ENCODE measurements at regions of chr6 and their contacts with region 1.

Region 1: GRCh38 chr6:28542440-28543296 is 17.0 kb downstream of the GPX5 start:
- DNase-seq: peak; percentile 80 to 83
- H3K4me3 ChIP-seq: peak overlapping the region; percentile 65; the same call in 1 of the 2 replicates
- H3K27ac ChIP-seq: 0 out of 2 replicates have a peak overlapping the region, but pooled peaks have one; percentile 20
- H3K4me1 ChIP-seq: peaks cover 12% of the 10 kb centered on the region; the same call in 1 of the 2 replicates
- H3K27me3 ChIP-seq: no peaks in the 10 kb centered on the region
- CTCF ChIP-seq: peak; percentile 73

Region 2: GRCh38 chr6:28080631-28081485 is 461.8 kb before region 1 on chr6:
- CTCF ChIA-PET with region 1: no interaction called
- POLR2A ChIA-PET with region 1: no interaction called
- intact Hi-C with region 1: loop called (anchors 1 kb)
- DNase-seq: peak; percentile 89 to 95
- H3K4me3 ChIP-seq: peak overlapping the region; percentile 86
- H3K27ac ChIP-seq: peak overlapping the region; percentile 98
- H3K4me1 ChIP-seq: peaks cover 15% of the 10 kb centered on the region; the same call in 1 of the 2 replicates
- H3K27me3 ChIP-seq: no peaks in the 10 kb centered on the region
- CTCF ChIP-seq: no peak

Region 3: DNA sequence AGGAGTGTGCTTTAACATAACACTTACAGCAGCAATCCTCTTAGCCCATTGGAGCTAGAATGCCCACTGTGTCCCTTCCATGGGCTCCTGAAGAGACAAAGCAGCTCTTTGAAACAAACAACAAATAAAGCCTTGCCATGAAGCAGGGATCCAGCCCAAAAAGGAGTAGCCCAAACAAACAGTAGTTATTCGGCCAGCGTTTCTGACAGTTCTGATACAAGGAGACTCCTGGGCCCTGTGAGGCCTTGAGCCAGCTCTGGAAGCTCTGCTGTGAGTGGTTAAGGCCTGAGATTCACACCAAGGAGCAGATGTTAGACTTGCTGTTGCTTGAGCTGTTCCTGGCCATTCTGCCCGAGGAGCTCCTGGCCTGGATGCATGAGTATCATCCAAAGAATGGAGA is 435.2 kb before region 1 on chr6:
- CTCF ChIA-PET with region 1: no interaction called
- POLR2A ChIA-PET with region 1: no interaction called
- intact Hi-C with region 1: no loop called
- DNase-seq: no peak
- H3K4me3 ChIP-seq: no peak overlapping the region
- H3K27ac ChIP-seq: no peak overlapping the region
- H3K4me1 ChIP-seq: peaks cover 11% of the 10 kb centered on the region
- H3K27me3 ChIP-seq: no peaks in the 10 kb centered on the region
- CTCF ChIP-seq: no peak

Region 4: DNA sequence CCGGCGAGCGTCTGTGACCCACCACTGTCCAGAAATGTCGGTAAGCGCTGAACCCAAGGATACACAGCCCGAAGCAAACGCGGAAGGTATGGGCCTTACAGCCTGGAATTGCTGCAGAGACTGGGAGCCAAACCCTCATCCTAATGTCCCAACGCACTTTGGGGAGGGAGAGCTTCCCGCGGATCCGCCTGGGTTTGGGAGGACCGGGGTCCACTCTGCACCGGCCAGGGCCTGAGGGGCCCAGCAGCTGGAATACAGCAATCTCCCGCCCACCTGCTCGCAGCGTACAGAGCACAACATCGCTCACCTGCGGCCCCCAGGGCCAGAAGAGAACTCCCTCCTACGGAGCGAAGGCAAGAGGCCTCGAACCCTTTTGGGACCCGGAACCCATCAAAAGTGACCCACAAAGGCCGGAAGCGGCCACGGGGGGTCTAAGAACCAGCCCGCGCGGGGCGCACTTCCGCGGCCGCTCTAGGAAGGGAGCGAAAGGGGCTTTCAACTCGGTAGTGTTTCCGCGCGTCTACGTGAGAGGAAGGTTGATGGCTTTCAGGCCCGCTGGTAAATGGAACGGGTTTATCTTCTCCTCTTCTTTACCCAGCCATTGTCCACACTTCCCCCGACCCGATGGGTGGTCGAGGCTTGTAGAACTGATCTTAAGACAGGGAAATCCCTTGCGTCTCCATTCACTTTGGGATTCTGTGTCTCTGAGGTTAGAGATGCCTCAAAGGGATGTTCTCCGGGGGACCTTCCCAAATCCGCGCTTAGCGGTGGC is 143.1 kb before region 1 on chr6 and contains the start of gene ZSCAN12:
- CTCF ChIA-PET with region 1: no interaction called
- POLR2A ChIA-PET with region 1: no interaction called
- intact Hi-C with region 1: loop called (anchors 1 kb)
- DNase-seq: peak; percentile 75 to 84
- H3K4me3 ChIP-seq: peak within 1 kb of the TSS; percentile 74
- H3K27ac ChIP-seq: peak within 1 kb of the TSS; percentile 43
- H3K4me1 ChIP-seq: peaks cover 30% of the 10 kb centered on the region
- H3K27me3 ChIP-seq: no peaks in the 10 kb centered on the region
- CTCF ChIP-seq: peak; percentile 43
- total RNA-seq, gene ZSCAN12: 10.9 and 11.2 TPM in 2 replicates

Region 5: DNA sequence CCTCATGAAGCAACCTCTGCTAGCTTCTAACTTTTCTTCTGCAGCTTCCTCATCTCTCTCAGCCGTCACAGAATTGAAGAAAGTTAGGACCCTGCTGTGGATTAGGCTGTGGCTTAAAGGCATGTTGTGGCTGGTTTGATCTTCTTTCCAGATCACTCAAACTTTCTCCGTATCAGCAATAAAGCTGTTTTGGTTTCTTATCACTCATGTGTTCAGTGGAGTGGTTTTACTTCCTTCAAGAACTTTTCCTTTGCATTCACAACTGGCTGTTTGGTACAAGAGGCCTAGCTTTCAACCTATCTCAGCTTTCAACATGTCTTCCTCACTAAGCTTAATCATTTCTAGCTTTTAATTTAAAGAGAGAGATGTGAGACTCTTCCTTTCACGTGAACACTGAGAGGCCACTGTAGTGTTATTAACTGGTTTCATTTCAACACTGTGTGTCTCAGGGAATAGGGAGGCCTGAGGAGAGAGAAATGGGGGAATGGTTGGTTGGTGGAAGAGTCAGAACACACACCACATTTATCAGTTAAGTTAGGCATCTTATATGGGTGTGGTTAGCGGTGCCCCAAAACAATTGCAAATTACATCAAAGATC is 116.6 kb before region 1 on chr6:
- CTCF ChIA-PET with region 1: no interaction called
- POLR2A ChIA-PET with region 1: no interaction called
- intact Hi-C with region 1: no loop called
- DNase-seq: no peak
- H3K4me3 ChIP-seq: no peak overlapping the region
- H3K27ac ChIP-seq: no peak overlapping the region
- H3K4me1 ChIP-seq: no peaks in the 10 kb centered on the region; the same call in 1 of the 2 replicates
- H3K27me3 ChIP-seq: no peaks in the 10 kb centered on the region
- CTCF ChIP-seq: no peak

Region 6: DNA sequence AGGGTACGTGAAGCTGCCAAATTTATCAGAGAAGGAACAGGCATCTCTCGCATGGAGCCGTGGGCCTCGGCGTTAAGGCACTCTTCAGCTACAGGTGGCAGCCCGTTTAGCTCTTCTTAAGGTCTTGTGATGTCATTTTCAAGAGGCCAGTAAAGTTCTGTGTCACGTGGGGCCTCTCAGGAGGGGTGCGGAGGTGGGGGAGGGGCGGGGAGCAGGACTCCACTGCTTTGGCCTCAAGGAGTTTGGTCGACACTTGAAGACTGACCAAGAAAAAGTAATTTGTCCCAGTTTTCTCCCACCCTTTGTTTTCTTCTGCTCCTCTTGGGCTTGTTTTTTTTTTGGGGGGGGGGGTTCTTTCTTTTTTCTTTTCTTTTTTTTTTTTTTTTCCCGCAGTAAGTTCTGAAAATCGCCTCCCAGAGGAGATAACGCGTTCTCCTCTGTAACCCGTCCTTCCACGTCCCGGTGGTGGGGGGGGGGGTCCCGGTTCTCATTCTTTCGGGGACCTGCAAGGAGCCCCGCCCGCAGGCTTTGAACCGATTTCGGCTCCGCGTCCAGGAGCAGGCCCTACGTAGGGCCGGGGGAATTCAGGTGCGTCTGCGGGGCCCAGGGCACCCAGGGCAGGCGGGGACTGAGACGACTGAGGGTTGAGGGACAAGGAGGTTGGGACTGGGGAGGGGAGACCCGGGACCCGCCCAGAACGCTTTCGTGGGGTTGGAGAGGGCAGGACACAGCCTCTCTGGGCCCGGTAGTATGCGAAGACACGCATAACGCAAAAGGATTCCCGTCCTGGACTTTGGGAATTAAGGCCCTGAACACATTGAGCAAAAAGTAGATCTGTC is 53.1 kb before region 1 on chr6:
- CTCF ChIA-PET with region 1: no interaction called
- POLR2A ChIA-PET with region 1: no interaction called
- intact Hi-C with region 1: loop called (anchors 1 kb)
- DNase-seq: peak; percentile 80 to 86
- H3K4me3 ChIP-seq: peak overlapping the region; percentile 63
- H3K27ac ChIP-seq: peak overlapping the region; percentile 64
- H3K4me1 ChIP-seq: peaks cover 24% of the 10 kb centered on the region
- H3K27me3 ChIP-seq: no peaks in the 10 kb centered on the region
- CTCF ChIP-seq: no peak

Region 7: DNA sequence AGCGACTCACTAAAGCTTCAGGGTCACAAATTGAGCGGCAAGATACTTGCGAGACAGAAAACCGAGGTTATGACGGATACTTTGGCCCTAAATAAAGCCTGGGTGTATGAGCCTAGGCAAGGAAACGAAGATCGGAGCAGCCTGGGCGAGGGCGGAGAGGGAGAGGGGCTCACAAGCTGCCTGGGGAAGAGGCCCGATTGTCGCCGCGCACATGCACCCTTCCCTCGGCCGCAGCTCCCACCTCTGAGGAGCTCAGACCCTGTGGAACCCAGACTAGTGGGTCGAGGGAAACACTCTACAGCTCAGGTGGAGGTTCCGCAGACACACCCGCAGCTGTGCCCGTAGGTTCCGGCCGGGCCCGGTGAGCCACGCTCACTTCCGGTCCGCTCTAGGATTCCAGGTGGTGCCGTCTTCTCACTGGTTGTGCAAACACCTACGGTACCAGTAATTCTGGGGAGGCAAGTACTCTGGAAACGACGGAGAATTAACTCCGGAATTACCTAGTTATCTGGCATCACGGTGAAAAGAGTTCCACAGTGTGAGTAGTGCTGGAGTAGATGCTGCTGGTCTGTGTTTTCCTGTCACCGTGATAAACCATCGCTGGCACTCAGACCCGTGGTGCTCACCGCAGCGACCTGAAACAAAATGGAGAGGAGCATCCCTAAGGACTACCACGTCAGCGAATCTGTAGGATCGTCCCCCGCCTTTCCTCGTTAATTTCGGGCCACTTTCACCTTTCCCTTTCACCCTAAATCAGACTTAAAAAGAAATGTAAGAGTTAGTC is 44.5 kb after region 1 on chr6:
- CTCF ChIA-PET with region 1: no interaction called
- POLR2A ChIA-PET with region 1: interaction called, 7 read pairs
- intact Hi-C with region 1: loop called (anchors 5 kb)
- DNase-seq: peak; percentile 58 to 75
- H3K4me3 ChIP-seq: peak overlapping the region; percentile 98
- H3K27ac ChIP-seq: peak overlapping the region; percentile 50; the same call in 1 of the 2 replicates
- H3K4me1 ChIP-seq: peaks cover 32% of the 10 kb centered on the region
- H3K27me3 ChIP-seq: no peaks in the 10 kb centered on the region
- CTCF ChIP-seq: no peak

Region 8: DNA sequence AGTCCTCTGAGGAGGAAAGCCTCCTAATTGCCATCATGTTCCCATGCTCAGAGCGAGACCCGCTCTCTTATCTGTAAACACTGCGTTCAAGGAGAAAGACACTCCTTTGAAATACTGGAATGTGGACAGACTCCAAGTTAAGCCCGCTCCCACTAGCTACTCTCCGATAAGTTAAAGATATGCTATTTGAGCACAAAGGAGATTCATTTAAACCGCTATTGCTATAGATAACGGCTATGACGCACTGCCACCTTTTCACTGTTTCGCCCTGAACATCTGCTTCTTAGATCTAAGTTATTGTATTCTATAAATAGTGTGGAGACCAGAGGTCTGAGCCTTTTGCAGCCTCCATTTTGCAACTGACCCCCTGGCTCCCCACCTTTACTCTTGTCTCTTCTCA is 65.3 kb after region 1 on chr6:
- CTCF ChIA-PET with region 1: no interaction called
- POLR2A ChIA-PET with region 1: no interaction called
- intact Hi-C with region 1: no loop called
- DNase-seq: no peak
- H3K4me3 ChIP-seq: no peak overlapping the region
- H3K27ac ChIP-seq: no peak overlapping the region
- H3K4me1 ChIP-seq: peaks cover 10% of the 10 kb centered on the region; the same call in 1 of the 2 replicates
- H3K27me3 ChIP-seq: no peaks in the 10 kb centered on the region; the same call in 1 of the 2 replicates
- CTCF ChIP-seq: no peak

Region 9: GRCh38 chr6:28673800-28674671 is 131.4 kb after region 1 on chr6:
- CTCF ChIA-PET with region 1: no interaction called
- POLR2A ChIA-PET with region 1: no interaction called
- intact Hi-C with region 1: loop called (anchors 5 kb)
- DNase-seq: peak; percentile 70 to 73
- H3K4me3 ChIP-seq: peak overlapping the region; percentile 79
- H3K27ac ChIP-seq: no peak overlapping the region
- H3K4me1 ChIP-seq: no peaks in the 10 kb centered on the region
- H3K27me3 ChIP-seq: no peaks in the 10 kb centered on the region
- CTCF ChIP-seq: no peak

Region 10: DNA sequence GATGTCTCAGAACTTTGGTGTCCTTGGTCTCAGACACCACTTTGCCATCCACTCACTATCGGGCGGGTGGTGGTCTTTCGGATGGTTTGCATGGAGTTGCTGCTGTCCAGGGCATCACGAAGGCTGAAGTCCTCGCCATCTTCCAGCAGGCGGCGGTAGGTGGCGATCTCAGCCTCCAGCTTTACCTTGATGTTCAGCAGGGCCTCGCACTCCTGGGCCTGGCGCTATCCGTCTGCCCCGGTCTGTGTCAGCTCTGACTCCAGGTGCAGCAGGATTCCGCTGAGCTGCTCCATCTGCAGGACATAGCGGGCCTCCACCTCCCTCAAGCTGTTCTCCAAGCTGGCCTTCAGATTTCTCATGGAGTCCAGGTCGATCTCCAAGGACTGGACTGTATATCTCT is 426.5 kb after region 1 on chr6:
- CTCF ChIA-PET with region 1: no interaction called
- POLR2A ChIA-PET with region 1: no interaction called
- intact Hi-C with region 1: no loop called
- DNase-seq: no peak
- H3K4me3 ChIP-seq: no peak overlapping the region
- H3K27ac ChIP-seq: no peak overlapping the region
- H3K4me1 ChIP-seq: no peaks in the 10 kb centered on the region
- H3K27me3 ChIP-seq: no peaks in the 10 kb centered on the region
- CTCF ChIP-seq: no peak